Ascending aorta (tissue), 2 donors: ENCODE measurements at regions of chr9 and their contacts with region 1.

Region 1: DNA sequence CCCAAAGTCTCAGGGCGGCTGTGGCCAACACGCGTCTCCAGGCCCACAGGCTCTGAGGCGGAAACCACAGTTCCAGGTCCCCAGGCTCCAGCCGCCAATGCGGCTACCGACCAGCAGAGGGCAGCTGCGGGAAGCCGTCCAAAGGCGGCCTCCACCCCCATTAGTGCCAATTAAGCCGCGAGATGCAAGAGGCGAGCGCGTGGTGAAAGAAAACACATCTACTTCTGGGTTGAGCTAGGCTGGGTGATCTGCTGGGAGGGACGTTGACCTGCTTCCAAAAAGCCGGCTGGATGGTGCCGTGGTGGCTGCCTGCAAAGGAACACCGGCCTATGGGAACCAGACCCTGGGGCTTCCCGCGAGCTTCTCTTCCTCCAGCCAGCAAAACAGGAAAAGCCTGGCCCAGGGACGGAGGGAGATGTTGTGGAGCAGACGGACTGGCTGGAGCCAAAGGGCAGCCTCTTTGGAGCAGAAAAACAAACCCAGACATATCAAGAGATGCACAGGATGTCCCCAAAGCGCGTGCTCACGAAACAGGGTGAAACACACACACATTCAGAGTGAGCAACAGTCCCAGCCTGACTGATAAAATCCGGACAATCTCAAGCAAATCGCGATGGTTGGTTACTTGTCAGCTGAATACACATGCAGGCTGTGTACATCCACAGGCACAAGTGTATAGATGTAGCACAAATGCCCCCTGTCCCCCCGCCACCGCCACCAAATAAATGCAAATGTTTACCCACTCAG is 187.1 kb upstream of the BRINP1 start:
- DNase-seq: peak in 1 of 2 donors; percentile 83
- H3K4me3 ChIP-seq: peak overlapping the region; percentile 48 to 57
- H3K27ac ChIP-seq: peak overlapping the region in 1 of 2 donors; percentile 51
- H3K4me1 ChIP-seq: no peaks in the 10 kb centered on the region
- H3K27me3 ChIP-seq: no peaks in the 10 kb centered on the region
- CTCF ChIP-seq: peak; percentile 85 to 95 (median 87)

Region 2: DNA sequence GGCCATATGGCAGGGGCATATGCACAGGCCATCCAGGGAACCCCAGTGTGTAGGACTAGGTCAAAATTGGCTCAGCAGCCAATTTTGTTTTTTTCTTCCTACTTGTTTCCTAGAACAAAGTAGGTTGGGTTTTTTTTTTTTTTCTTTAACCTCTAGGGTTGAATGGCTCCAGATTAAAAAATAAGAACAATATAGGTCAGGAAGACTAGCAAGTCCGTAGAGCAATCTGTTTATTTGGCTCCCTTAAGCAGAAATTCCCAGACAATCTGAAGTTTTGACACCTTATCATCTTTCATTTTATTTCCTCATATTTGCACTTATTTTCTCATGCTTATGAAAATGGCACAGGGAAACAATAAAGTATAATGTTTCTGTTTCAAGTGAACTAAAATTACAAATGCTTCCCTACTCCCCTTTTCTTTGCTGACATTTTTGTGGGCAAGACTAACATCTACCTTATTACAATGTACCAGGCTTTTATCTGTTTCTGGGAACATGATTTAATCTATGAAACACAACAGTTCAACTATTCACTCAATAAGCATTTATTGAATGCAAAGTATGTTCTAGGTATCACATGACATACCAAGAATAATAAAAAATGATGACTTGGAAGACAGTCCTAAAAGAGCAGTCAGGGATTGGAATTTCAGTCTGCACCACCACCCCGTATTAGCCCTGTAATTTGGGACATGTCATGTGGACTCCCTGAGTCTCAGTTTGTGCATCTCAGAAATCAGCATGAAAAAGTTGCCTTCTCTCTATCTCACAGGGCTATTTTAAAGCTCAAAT is 1821.6 kb before region 1 on chr9:
- intact Hi-C with region 1: no loop called
- DNase-seq: no peak
- H3K4me3 ChIP-seq: no peak overlapping the region
- H3K27ac ChIP-seq: no peak overlapping the region
- H3K4me1 ChIP-seq: peaks cover 0 to 2% of the 10 kb centered on the region in 2 donors
- H3K27me3 ChIP-seq: no peaks in the 10 kb centered on the region
- CTCF ChIP-seq: no peak

Region 3: DNA sequence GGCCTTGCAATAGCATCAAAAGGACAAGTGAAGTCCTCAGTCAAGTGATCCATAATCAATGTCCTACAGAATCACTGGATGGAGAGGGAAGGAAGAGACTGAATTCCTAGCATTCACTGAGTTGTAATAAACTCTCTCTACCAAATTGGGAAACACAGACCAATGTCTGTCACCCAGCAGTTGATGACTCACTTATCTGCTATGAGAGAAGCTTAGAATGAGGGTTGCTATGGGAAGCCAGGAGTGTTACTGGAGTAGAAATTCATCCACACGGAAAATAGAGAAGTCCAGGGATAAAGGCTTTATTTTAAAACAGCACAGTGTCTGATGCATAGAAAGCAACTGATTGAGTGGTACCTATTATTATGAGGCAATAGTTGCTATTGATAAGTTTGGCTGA is 594.4 kb before region 1 on chr9:
- intact Hi-C with region 1: no loop called
- DNase-seq: no peak
- H3K4me3 ChIP-seq: no peak overlapping the region
- H3K27ac ChIP-seq: no peak overlapping the region
- H3K4me1 ChIP-seq: no peaks in the 10 kb centered on the region
- H3K27me3 ChIP-seq: no peaks in the 10 kb centered on the region
- CTCF ChIP-seq: no peak

Region 4: DNA sequence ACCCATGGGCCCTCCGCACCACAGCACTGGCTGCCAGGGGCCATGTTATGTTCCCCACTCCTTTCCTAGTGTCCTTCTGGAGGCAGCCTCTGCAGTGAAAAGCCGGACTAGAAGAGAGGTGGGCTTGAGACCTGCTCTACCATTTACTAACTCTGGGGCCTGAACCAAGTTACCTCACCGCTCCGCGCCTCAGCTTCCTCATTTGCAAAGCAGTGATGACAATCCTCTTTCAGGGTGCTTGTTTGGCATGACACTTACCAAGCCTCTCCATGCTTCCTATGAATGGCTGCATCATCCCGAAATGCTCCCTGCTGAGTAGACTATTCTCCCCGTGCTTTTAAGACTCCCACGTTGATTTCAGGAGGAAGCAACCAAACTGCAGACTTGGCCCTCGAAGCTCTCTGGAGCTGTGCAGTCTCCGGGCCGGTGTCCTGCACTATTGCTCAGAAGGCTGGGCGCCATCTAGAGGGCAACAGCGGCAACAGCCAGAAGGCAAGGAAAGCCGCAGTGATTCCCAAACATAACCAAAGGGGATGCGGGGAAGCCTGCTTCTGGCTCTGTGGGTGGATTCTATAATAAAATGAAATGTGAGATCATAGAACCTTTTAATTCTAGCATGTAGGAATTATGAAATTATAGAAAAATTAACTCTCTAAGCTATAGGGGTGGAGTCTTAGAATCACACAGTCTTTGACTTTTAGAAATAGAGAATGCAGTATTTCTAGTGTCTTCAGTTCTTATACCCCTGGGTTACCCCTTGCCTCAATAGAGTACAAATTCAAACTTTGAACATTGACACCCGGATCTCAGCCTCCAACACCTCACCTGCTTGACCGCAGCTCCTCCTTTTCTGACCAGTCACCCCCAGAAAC is 412.8 kb after region 1 on chr9:
- intact Hi-C with region 1: loop called (anchors 1 kb)
- DNase-seq: peak in 1 of 2 donors; percentile 85
- H3K4me3 ChIP-seq: no peak overlapping the region
- H3K27ac ChIP-seq: no peak overlapping the region
- H3K4me1 ChIP-seq: peaks cover 0 to 3% of the 10 kb centered on the region in 2 donors
- H3K27me3 ChIP-seq: no peaks in the 10 kb centered on the region
- CTCF ChIP-seq: peak; percentile 69 to 95 (median 93)

Region 5: DNA sequence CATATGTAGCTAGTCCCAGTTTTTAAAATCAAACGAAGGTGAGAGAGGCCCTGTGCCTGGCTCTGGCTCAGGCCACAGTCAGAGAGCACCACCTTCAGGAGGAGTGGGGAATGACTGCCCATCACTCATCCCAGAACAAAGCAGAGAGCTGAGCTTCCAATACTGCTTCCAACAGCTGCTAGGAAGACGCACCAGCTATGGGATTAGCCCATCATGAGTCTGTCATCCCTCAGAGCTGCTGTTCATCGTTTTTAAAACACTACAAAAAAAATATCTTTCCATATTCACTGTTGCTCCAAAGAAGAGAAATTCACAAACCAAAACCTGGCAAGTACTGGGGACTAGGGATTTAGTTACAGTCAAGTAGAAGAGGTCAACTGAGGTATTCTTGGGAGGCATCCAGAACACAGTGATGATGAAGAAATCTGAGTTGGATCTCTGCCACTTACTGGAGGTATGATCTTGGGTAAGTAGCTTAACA is 921.3 kb after region 1 on chr9:
- intact Hi-C with region 1: loop called (anchors 5 kb)
- DNase-seq: peak in 1 of 2 donors; percentile 72
- H3K4me3 ChIP-seq: no peak overlapping the region
- H3K27ac ChIP-seq: no peak overlapping the region
- H3K4me1 ChIP-seq: peaks cover 0 to 4% of the 10 kb centered on the region in 2 donors
- H3K27me3 ChIP-seq: no peaks in the 10 kb centered on the region
- CTCF ChIP-seq: peak; percentile 79 to 98 (median 85)